A673 (cell line): ENCODE measurements at regions of chr11 and their contacts with region 1.

Region 1: GRCh38 chr11:47335733-47336132 is 16.8 kb downstream of the MYBPC3 start:
- DNase-seq: no peak
- H3K4me3 ChIP-seq: no peak overlapping the region
- H3K27ac ChIP-seq: no peak overlapping the region
- H3K4me1 ChIP-seq: no peaks in the 10 kb centered on the region
- H3K27me3 ChIP-seq: no peaks in the 10 kb centered on the region
- CTCF ChIP-seq: no peak

Region 2: GRCh38 chr11:46826310-46827044 is 509.3 kb before region 1 on chr11:
- CTCF ChIA-PET with region 1: no interaction called
- POLR2A ChIA-PET with region 1: no interaction called
- intact Hi-C with region 1: no loop called
- DNase-seq: peak; percentile 97
- H3K4me3 ChIP-seq: peak overlapping the region; percentile 39
- H3K27ac ChIP-seq: peak overlapping the region; percentile 0
- H3K4me1 ChIP-seq: peaks cover 41% of the 10 kb centered on the region
- H3K27me3 ChIP-seq: no peaks in the 10 kb centered on the region
- CTCF ChIP-seq: no peak

Region 3: DNA sequence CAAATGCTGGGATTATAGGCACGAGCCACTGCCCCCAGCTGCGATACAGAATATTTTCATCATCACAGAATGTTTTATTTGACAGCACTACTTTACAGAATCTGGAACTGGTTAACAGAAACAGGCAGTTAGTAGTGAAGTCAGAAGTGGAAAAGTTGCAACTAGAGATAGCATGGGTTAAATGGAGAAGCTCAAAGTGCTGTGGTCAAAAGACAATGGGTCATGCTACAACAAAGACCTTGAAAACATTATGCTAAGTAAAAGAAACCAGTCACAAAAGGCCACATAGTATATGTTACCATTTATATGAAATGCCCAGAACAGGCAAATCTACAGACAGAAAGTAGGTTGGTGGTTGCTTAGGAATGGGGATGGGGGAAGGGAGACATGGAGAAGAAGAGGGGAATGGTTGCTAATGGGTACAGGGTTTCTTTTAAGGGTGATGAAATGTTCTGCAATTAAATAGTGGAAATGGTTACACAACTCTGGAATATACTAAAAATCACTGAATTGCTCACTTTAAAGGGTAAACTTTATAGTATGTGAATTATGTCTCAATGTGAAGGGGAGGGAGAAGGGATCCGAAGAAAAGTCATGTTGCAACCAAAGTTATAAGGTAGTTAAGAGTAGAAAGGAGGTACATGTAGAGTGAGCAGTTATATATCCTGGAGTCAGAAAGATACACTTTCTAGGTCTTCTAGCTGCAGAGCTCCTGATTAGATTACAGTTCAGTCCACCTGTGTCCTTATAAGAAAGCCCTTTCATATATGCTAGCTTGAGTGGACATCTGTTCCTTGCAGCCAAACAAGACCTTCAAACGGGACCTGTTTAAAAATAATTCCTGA is 159.5 kb after region 1 on chr11:
- CTCF ChIA-PET with region 1: interaction called, 13 read pairs
- POLR2A ChIA-PET with region 1: no interaction called
- intact Hi-C with region 1: no loop called
- DNase-seq: peak; percentile 61
- H3K4me3 ChIP-seq: no peak overlapping the region
- H3K27ac ChIP-seq: peak overlapping the region; percentile 57
- H3K4me1 ChIP-seq: peaks cover 58% of the 10 kb centered on the region
- H3K27me3 ChIP-seq: no peaks in the 10 kb centered on the region
- CTCF ChIP-seq: no peak